ENCODE measurements at regions of chr11 and their contacts with region 1.

Region 1: DNA sequence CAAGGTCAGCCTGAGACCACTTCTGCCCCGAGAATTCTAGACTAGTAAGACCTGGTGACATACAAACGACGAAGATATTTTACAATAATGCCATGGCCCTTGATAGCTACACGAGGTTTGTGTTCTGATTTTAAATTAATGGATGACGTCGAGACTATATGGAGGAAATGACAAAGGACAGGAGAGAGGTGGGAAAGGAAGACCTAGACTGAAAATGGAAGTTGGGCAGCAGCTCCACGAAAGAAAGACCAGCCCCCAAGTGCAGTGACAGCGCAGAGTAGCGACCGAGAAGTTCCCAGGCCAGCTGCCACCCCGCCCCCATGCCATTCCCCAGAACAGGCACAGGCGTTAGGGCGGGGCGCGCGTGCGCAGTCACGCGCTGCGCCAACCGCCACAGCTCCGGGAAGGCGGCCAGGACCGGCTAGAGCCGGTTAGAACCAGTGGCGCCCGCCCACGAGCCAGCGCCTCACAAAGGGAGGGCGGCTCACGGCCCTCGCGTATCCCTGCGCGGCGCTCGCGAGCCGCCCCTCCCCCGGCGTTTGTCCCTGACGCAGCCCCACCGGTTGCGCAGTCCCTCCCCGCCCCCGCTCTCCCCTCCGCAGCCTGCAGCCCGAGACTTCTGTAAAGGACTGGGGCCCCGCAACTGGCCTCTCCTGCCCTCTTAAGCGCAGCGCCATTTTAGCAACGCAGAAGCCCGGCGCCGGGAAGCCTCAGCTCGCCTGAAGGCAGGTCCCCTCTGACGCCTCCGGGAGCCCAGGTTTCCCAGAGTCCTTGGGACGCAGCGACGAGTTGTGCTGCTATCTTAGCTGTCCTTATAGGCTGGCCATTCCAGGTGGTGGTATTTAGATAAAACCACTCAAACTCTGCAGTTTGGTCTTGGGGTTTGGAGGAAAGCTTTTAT is 1.5 kb upstream of the MALAT1 start:
- DNase-seq: peak; percentile 97
- ATAC-seq: peak; percentile 70
- H3K4me3 ChIP-seq: peak overlapping the region; percentile 72
- H3K27ac ChIP-seq: peak overlapping the region; percentile 99
- H3K4me1 ChIP-seq: peaks cover 13% of the 10 kb centered on the region
- H3K27me3 ChIP-seq: no peaks in the 10 kb centered on the region
- CTCF ChIP-seq: no peak
- POLR2A ChIP-seq: no peak
- RAD21 ChIP-seq: no peak

Region 2: GRCh38 chr11:65382033-65382807 is 115.2 kb before region 1 on chr11 and contains the start of gene SLC25A45:
- CTCF ChIA-PET with region 1: no interaction called
- POLR2A ChIA-PET with region 1: interaction called, 32 read pairs
- dilution Hi-C with region 1: no loop called
- in situ Hi-C with region 1: no loop called
- intact Hi-C with region 1: no loop called
- DNase-seq: peak; percentile 99
- ATAC-seq: peak; percentile 84
- H3K4me3 ChIP-seq: peak within 1 kb of the TSS; percentile 21
- H3K27ac ChIP-seq: peak within 1 kb of the TSS; percentile 89
- H3K4me1 ChIP-seq: peaks cover 27% of the 10 kb centered on the region
- H3K27me3 ChIP-seq: no peaks in the 10 kb centered on the region
- CTCF ChIP-seq: peak; percentile 88
- POLR2A ChIP-seq: peak; percentile 52; the same call in 1 of the 2 replicates
- RAD21 ChIP-seq: peak; percentile 86
- total RNA-seq, gene SLC25A45: 0.56 and 0.72 TPM in 2 replicates

Region 3: DNA sequence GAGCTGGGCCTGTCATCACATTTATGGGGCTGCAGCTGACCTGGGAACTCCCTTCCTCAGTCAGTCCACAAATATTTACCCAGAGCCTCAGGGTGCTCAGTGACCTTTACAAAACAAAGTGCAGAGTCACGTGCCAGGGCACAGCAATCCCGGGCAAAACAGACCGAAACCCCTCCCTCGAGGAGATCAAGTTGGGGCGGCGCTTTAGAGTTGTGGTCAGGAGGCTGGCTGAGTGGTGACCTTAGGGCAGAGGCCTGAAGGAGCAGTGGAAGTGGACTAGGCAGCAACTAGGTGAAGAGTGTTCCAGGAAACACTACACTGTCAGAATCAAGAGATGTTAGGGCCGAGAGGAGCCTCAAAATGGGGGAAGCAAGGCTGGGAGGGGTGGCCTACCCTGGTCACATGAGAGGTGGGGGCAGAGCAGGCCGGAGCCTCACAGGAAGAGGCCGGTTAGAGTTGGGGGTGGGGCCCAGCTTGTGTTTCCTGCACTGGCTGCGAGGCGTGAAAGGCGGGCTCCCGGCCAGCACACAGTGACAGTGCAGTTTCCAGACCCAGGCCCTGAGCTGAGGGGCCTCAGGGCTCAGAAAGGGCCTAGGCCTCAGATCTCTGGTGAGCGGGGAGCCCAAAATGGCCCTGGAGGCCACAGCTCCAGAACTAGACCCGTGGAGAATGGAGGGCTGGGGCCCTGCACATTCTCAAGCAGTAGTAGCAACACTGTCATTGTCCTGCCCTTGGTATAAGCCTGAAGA is 78.5 kb before region 1 on chr11:
- CTCF ChIA-PET with region 1: interaction called, 6 read pairs
- POLR2A ChIA-PET with region 1: interaction called, 142 read pairs
- dilution Hi-C with region 1: no loop called
- in situ Hi-C with region 1: no loop called
- intact Hi-C with region 1: loop called (anchors 2 kb)
- DNase-seq: peak; percentile 91
- ATAC-seq: peak; percentile 35
- H3K4me3 ChIP-seq: peak overlapping the region; percentile 16; the same call in 1 of the 2 replicates
- H3K27ac ChIP-seq: peak overlapping the region; percentile 98
- H3K4me1 ChIP-seq: peaks cover 38% of the 10 kb centered on the region
- H3K27me3 ChIP-seq: no peaks in the 10 kb centered on the region
- CTCF ChIP-seq: no peak
- POLR2A ChIP-seq: peak; percentile 81
- RAD21 ChIP-seq: no peak

Region 4: GRCh38 chr11:65448418-65449105 is 48.8 kb before region 1 on chr11:
- CTCF ChIA-PET with region 1: no interaction called
- POLR2A ChIA-PET with region 1: interaction called, 27 read pairs
- dilution Hi-C with region 1: no loop called
- in situ Hi-C with region 1: no loop called
- intact Hi-C with region 1: loop called (anchors 2 kb)
- DNase-seq: peak; percentile 64
- ATAC-seq: peak; percentile 4
- H3K4me3 ChIP-seq: no peak overlapping the region
- H3K27ac ChIP-seq: no peak overlapping the region; the same call in 1 of the 2 replicates
- H3K4me1 ChIP-seq: peaks cover 7% of the 10 kb centered on the region; the same call in 1 of the 2 replicates
- H3K27me3 ChIP-seq: no peaks in the 10 kb centered on the region
- CTCF ChIP-seq: no peak
- POLR2A ChIP-seq: peak; percentile 33; the same call in 1 of the 2 replicates
- RAD21 ChIP-seq: no peak

Region 5: DNA sequence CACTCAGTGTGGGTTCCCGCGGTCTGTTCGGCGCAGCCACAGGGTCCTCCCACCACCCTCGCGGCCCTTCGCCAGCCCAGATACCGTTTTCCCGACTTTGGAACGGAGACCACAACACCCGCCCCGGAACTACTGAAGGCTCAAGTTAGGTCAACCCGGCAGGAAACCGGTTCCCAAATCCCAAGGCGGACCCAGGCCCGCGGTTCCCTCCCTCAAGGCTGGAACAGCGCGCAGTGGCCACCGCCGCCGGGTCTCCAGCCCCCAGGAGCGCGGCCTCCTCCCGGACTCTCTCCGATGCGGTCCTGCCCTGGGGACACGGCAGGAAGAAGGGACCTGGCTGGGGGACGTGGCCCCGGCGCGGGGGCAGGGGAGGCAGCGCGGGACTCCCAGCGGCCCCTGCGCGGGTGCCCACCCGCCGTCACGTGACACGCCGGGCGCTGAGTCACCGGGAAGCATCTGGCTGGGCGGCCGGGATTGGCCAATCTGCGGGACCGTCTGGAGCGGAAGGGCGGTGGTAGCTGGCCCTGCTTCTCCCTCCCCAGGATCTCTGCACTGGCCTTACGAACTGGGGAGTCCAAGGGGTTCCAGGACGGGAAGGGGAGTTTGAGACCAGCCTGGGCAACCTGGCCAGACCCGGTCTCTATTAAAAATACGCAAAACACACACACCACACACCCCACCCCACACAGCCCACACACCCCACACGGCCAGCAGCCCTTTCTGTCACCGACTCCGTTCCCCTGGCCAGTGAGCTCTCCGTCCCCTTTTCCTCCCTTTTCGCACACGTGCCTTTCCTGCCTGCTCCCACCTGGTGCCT is 20.0 kb before region 1 on chr11:
- CTCF ChIA-PET with region 1: interaction called, 12 read pairs
- POLR2A ChIA-PET with region 1: interaction called, 494 read pairs
- dilution Hi-C with region 1: no loop called
- in situ Hi-C with region 1: no loop called
- intact Hi-C with region 1: loop called (anchors 1 kb)
- DNase-seq: peak; percentile 92
- ATAC-seq: peak; percentile 72
- H3K4me3 ChIP-seq: peak overlapping the region; percentile 73
- H3K27ac ChIP-seq: peak overlapping the region; percentile 100
- H3K4me1 ChIP-seq: peaks cover 22% of the 10 kb centered on the region
- H3K27me3 ChIP-seq: no peaks in the 10 kb centered on the region
- CTCF ChIP-seq: no peak
- POLR2A ChIP-seq: peak; percentile 83
- RAD21 ChIP-seq: no peak; the same call in 1 of the 2 replicates